ENCODE measurements at regions of chr7 and their contacts with region 1.

Region 1: DNA sequence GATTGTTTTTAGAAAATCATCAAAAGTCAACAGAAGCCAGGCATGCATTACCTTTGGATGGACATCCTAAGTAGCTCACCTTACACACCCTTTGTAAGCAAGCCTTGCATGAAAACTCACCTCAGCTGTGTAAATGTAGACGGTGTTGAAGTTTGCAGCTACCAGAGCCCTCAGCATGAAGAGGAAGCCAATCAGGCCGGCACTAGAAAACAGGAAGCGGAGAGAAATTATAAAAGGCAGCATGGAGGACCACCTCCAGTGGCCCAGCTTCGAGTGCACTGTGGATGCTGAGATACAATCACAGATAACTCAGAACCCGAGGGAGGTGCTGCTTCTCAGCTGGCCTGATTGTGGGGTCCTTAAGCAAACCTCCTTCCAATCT is 75.3 kb downstream of the SVOPL start:
- DNase-seq: peak; percentile 38
- H3K4me3 Mint-ChIP-seq: no peak overlapping the region
- H3K27ac Mint-ChIP-seq: peak overlapping the region; percentile 72
- H3K4me1 Mint-ChIP-seq: peaks cover 43% of the 10 kb centered on the region
- H3K27me3 Mint-ChIP-seq: no peaks in the 10 kb centered on the region

Region 2: DNA sequence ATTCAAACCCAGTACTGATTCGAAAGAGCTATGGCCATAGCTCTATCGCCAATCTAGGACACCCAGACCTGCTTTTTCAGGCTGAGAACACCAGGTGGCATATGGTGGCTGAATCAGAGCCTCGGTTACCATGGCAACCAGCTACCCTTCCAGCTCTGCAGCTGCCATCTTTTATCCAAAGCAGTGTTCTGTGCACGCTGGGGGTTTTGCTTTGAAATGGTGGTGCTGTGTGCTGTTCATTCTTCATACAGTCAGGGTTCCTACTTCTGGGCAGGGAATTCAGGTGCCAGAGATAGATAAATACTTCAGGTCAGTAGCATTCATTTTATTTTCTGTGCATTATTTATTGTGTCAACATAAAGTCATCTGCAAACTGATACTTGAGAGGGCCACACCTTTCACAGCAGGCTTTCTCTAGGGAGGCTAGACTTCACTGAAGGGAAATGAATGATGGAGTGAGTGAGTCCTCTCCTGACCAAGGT is 464.2 kb before region 1 on chr7:
- CTCF ChIA-PET with region 1: no interaction called
- intact Hi-C with region 1: loop called (anchors 10 kb)
- DNase-seq: peak; percentile 88
- H3K4me3 Mint-ChIP-seq: no peak overlapping the region
- H3K27ac Mint-ChIP-seq: no peak overlapping the region
- H3K4me1 Mint-ChIP-seq: no peaks in the 10 kb centered on the region
- H3K27me3 Mint-ChIP-seq: no peaks in the 10 kb centered on the region

Region 3: GRCh38 chr7:138608275-138608674 is 17.6 kb before region 1 on chr7:
- CTCF ChIA-PET with region 1: no interaction called
- intact Hi-C with region 1: loop called (anchors 1 kb)
- DNase-seq: peak; percentile 57
- H3K4me3 Mint-ChIP-seq: no peak overlapping the region
- H3K27ac Mint-ChIP-seq: no peak overlapping the region
- H3K4me1 Mint-ChIP-seq: peaks cover 16% of the 10 kb centered on the region
- H3K27me3 Mint-ChIP-seq: no peaks in the 10 kb centered on the region

Region 4: DNA sequence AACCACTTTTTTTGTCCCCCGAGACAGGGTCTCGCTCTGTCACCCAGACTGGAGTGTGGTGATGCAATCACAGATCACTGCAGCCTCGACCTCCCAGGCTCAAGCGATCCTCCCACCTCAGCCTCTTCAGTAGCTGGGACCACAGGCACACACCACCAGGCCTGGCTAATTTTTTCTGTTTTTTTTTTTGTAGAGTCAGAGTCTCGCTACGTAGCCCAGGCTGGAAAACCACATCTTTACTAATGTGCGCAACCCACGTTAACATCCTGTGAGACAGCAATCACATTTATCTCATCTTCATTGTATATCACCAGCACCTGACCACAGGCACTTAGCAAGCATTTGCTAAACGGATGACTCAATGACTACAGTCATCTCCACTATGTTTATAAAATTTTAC is 250.0 kb after region 1 on chr7:
- CTCF ChIA-PET with region 1: no interaction called
- intact Hi-C with region 1: loop called (anchors 5 kb)
- DNase-seq: peak; percentile 81
- H3K4me3 Mint-ChIP-seq: no peak overlapping the region
- H3K27ac Mint-ChIP-seq: no peak overlapping the region
- H3K4me1 Mint-ChIP-seq: peaks cover 13% of the 10 kb centered on the region
- H3K27me3 Mint-ChIP-seq: no peaks in the 10 kb centered on the region

Measured in activated naive CD4-positive, alpha-beta T cell treated with anti-CD3 and anti-CD28 coated beads for 36 hours (primary cell).